AG04450 (cell line): ENCODE measurements at regions of chr13 and their contacts with region 1.

Region 1: GRCh38 chr13:75633285-75633684 is 2.8 kb upstream of the LMO7 start:
- DNase-seq: peak; percentile 72
- H3K4me3 ChIP-seq: no peak overlapping the region
- H3K27ac ChIP-seq: peak overlapping the region; percentile 68
- H3K27me3 ChIP-seq: no peaks in the 10 kb centered on the region
- CTCF ChIP-seq: no peak

Region 2: GRCh38 chr13:75458696-75459422 is 174.4 kb before region 1 on chr13:
- CTCF ChIA-PET with region 1: no interaction called
- POLR2A ChIA-PET with region 1: no interaction called
- DNase-seq: no peak
- H3K4me3 ChIP-seq: no peak overlapping the region
- H3K27ac ChIP-seq: no peak overlapping the region
- H3K27me3 ChIP-seq: no peaks in the 10 kb centered on the region
- CTCF ChIP-seq: no peak

Region 3: GRCh38 chr13:75621147-75621546 is 12.1 kb before region 1 on chr13:
- CTCF ChIA-PET with region 1: no interaction called
- POLR2A ChIA-PET with region 1: interaction called, 18 read pairs
- DNase-seq: peak; percentile 43
- H3K4me3 ChIP-seq: no peak overlapping the region
- H3K27ac ChIP-seq: no peak overlapping the region
- H3K27me3 ChIP-seq: no peaks in the 10 kb centered on the region
- CTCF ChIP-seq: no peak